Right ventricle myocardium inferior (tissue), 1 donor: ENCODE measurements at regions of chr9 and their contacts with region 1.

Region 1: GRCh38 chr9:5186416-5187169 is 1.2 kb upstream of the INSL6 start:
- DNase-seq: no peak
- ATAC-seq: peak; percentile 60

Region 2: GRCh38 chr9:5442400-5443011 is 255.9 kb after region 1 on chr9:
- intact Hi-C with region 1: loop called (anchors 5 kb)
- DNase-seq: no peak
- ATAC-seq: no peak